ENCODE measurements at regions of chr1 and their contacts with region 1.

Region 1: GRCh38 chr1:119870917-119871596 is 25.3 kb downstream of the ADAM30 start:
- DNase-seq: peak; percentile 74 to 84 (median 75)
- H3K4me3 ChIP-seq: peak overlapping the region in 3 of 7 experiments; percentile 16 to 62 (median 41)
- H3K27ac ChIP-seq: no peak overlapping the region
- H3K4me1 ChIP-seq: peaks cover 0 to 4% (median 0%) of the 10 kb centered on the region in 4 experiments
- H3K27me3 ChIP-seq: no peaks in the 10 kb centered on the region

Region 2: GRCh38 chr1:119773711-119774241 is 97.3 kb before region 1 on chr1:
- CTCF ChIA-PET with region 1: no interaction called
- POLR2A ChIA-PET with region 1: no interaction called
- DNase-seq: no peak
- H3K4me3 ChIP-seq: no peak overlapping the region
- H3K27ac ChIP-seq: no peak overlapping the region
- H3K4me1 ChIP-seq: no peaks in the 10 kb centered on the region
- H3K27me3 ChIP-seq: peaks cover 0 to 4% (median 0%) of the 10 kb centered on the region in 5 experiments

Region 3: GRCh38 chr1:119808972-119809550 is 62.0 kb before region 1 on chr1:
- CTCF ChIA-PET with region 1: interaction called, 21 read pairs
- POLR2A ChIA-PET with region 1: no interaction called
- DNase-seq: peak; percentile 67 to 83 (median 81)
- H3K4me3 ChIP-seq: peak overlapping the region in 1 of 7 experiments; percentile 35
- H3K27ac ChIP-seq: no peak overlapping the region
- H3K4me1 ChIP-seq: peaks cover 0 to 3% (median 0%) of the 10 kb centered on the region in 4 experiments
- H3K27me3 ChIP-seq: peaks cover 0 to 5% (median 0%) of the 10 kb centered on the region in 5 experiments

Region 4: DNA sequence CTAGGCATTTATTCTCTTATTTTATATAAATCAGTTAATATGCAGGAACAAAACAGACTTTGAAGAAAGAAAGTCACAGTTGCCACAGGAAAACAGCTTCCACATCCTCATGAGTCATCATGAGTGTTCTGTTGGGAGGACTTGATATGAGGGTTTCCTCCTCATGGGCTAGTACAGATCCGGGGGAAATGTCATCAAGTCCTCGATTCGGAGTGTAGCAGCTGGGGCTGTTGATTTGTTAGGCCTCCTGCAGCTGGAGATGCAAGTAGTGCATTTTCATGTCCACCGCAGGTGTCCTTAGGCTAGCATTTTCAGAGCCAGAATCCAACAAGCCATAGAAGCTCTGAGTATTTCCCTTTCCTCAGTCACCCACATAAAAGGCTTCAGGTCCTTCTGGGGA is 11.4 kb before region 1 on chr1:
- CTCF ChIA-PET with region 1: interaction called, 30 read pairs
- POLR2A ChIA-PET with region 1: no interaction called
- DNase-seq: peak; percentile 82 to 97 (median 93)
- H3K4me3 ChIP-seq: peak overlapping the region in 2 of 7 experiments; percentile 14 to 31
- H3K27ac ChIP-seq: peak overlapping the region in 1 of 2 experiments; percentile 66
- H3K4me1 ChIP-seq: peaks cover 6 to 32% (median 28%) of the 10 kb centered on the region in 4 experiments
- H3K27me3 ChIP-seq: no peaks in the 10 kb centered on the region

Region 5: GRCh38 chr1:119882132-119882952 is 11.3 kb after region 1 on chr1:
- CTCF ChIA-PET with region 1: interaction called, 15 read pairs
- POLR2A ChIA-PET with region 1: no interaction called
- DNase-seq: peak in 1 of 3 donors; percentile 22
- H3K4me3 ChIP-seq: no peak overlapping the region
- H3K27ac ChIP-seq: no peak overlapping the region
- H3K4me1 ChIP-seq: peaks cover 0 to 11% (median 7%) of the 10 kb centered on the region in 4 experiments
- H3K27me3 ChIP-seq: no peaks in the 10 kb centered on the region

Region 6: DNA sequence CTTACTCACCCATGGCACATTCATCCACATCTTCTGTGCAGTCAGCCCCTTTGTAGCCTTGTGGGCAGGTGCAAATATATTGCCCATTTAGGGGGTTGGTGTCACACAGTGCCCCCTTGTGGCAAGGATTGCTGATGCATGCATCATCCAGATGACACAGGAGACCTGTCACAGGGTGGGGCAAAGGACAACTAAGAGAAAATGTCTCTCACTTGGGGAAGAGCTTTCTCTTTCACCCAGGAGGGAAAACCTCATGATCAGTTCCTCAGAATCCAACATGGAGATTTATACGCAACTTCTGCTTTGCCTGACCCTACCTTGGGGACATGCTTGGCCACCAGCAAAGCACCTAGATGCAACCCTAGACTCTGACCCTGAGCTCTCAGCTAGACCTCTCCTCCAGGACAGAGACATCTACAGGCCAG is 97.0 kb after region 1 on chr1:
- CTCF ChIA-PET with region 1: interaction called, 11 read pairs
- POLR2A ChIA-PET with region 1: no interaction called
- DNase-seq: peak; percentile 78 to 89 (median 87)
- H3K4me3 ChIP-seq: no peak overlapping the region
- H3K27ac ChIP-seq: no peak overlapping the region
- H3K4me1 ChIP-seq: peaks cover 0 to 4% (median 4%) of the 10 kb centered on the region in 4 experiments
- H3K27me3 ChIP-seq: no peaks in the 10 kb centered on the region

Measured in common myeloid progenitor, CD34-positive (primary cell).